ENCODE measurements at regions of chr2 and their contacts with region 1.

Region 1: GRCh38 chr2:240434728-240435456 is 571 bp upstream of the GPC1 start:
- DNase-seq: peak; percentile 52
- ATAC-seq: no peak
- H3K4me3 ChIP-seq: peak overlapping the region in 2 of 3 experiments; percentile 25 to 49; a peak in 2 of 6 replicates
- H3K27ac ChIP-seq: no peak overlapping the region
- H3K4me1 ChIP-seq: peaks cover 10% of the 10 kb centered on the region
- H3K27me3 ChIP-seq: peaks cover 36 to 69% of the 10 kb centered on the region in 2 experiments
- CTCF ChIP-seq: no peak
- EP300 ChIP-seq: no peak
- POLR2A ChIP-seq: no peak
- RAD21 ChIP-seq: no peak

Region 2: DNA sequence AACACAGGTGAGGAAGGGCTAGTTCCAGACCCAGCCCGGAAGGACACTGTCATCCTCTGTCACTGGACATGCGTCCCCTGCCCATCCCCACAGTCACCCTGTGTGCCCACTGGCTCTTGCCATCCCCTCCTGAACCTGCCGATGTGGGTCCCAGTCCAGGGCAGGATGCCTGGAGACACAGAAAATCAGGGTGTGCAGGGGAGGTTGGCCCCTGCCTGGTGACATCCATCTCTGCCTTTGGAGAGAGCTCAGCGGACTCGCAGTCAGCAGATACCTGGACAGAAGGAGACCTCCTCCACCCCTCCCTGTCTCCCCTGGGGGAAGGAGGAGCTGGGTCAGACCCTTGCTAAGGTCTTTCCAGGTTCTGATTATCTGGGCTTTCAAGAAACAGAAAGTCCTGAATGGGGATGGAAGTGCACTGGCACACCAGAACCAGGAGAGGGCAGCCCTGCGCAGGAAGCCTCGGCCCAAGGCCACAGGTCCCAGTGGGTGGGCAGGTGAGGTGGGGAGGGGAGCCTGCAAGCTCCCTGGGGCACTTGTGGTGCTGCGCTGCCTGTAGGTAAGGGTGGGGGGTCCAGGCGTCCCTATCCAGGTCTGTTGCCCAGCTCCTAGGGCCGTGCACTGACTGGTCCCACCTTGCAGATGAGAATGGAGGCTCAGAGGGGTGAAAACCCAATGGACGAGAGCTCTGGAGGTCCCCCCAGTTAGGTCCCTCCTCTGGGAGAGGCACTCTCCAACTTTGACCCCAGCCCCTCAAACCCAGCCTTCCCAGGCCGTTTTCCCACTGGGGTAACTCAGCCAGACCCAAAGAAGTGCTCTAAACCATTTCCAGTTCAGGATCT is 284.7 kb before region 1 on chr2:
- CTCF ChIA-PET with region 1: interaction called, 11 read pairs
- POLR2A ChIA-PET with region 1: no interaction called
- in situ Hi-C with region 1: loop called (anchors 5 kb)
- intact Hi-C with region 1: loop called (anchors 5 kb)
- DNase-seq: peak; percentile 40
- ATAC-seq: peak; percentile 79
- H3K4me3 ChIP-seq: no peak overlapping the region
- H3K27ac ChIP-seq: no peak overlapping the region
- H3K4me1 ChIP-seq: peaks cover 12% of the 10 kb centered on the region
- H3K27me3 ChIP-seq: peaks cover 8 to 63% of the 10 kb centered on the region in 2 experiments; a peak in 4 of 5 replicates
- CTCF ChIP-seq: peak; percentile 91
- EP300 ChIP-seq: no peak
- POLR2A ChIP-seq: no peak
- RAD21 ChIP-seq: peak; percentile 72

Region 3: DNA sequence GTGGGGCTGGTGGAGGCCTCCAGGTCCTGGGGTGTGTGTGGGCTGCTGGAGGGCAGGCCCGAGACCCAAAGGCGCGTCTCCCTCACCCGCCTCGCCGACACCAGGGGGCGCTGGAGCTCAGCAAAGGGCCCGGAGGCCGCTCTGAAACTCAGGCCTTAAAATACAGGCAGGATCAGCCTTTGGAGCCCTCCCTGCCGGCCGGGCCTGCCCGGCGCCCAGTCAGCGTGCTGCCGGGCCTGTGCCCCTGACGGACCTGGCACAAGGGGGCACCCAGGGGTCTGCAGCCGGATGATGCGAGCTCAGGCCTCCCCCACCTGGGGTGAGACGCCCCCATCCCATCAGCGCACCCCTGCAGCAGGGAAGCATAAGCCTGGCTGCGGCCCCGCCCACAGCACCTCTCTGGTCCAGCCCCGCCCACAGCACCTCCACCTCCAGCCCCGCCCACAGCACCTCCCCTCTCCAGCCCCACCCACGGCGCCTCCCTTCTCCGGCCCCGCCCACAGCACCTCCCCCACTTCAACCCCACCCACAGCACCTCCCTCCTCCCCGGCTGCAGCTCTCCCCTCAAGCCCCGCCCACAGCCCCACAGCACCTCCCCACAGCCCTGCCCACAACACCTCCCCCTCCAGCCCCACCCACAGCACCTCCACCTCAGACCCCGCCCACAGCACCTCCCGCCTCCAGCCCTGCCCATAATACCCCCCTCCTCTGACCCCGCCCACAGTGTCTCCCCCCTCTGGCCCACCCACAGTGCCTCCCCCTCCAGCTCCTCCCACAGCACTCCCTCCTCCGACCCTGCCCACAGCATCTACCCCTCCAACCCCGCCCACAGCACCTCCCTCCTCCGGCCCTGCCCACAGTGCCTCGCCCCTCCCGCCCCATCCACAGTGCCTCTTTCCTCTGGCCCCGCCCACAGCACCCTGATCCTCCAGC is 201.7 kb before region 1 on chr2:
- CTCF ChIA-PET with region 1: interaction called, 84 read pairs
- POLR2A ChIA-PET with region 1: no interaction called
- in situ Hi-C with region 1: loop called (anchors 5 kb)
- intact Hi-C with region 1: loop called (anchors 1 kb)
- DNase-seq: peak; percentile 68
- ATAC-seq: peak; percentile 86
- H3K4me3 ChIP-seq: peak overlapping the region in 2 of 3 experiments; percentile 35 to 64; a peak in 3 of 6 replicates
- H3K27ac ChIP-seq: no peak overlapping the region
- H3K4me1 ChIP-seq: peaks cover 15% of the 10 kb centered on the region
- H3K27me3 ChIP-seq: peaks cover 12 to 54% of the 10 kb centered on the region in 2 experiments
- CTCF ChIP-seq: peak; percentile 99
- EP300 ChIP-seq: peak in 1 of 2 experiments; percentile 32; a peak in 1 of 4 replicates
- POLR2A ChIP-seq: no peak
- RAD21 ChIP-seq: peak; percentile 99

Region 4: DNA sequence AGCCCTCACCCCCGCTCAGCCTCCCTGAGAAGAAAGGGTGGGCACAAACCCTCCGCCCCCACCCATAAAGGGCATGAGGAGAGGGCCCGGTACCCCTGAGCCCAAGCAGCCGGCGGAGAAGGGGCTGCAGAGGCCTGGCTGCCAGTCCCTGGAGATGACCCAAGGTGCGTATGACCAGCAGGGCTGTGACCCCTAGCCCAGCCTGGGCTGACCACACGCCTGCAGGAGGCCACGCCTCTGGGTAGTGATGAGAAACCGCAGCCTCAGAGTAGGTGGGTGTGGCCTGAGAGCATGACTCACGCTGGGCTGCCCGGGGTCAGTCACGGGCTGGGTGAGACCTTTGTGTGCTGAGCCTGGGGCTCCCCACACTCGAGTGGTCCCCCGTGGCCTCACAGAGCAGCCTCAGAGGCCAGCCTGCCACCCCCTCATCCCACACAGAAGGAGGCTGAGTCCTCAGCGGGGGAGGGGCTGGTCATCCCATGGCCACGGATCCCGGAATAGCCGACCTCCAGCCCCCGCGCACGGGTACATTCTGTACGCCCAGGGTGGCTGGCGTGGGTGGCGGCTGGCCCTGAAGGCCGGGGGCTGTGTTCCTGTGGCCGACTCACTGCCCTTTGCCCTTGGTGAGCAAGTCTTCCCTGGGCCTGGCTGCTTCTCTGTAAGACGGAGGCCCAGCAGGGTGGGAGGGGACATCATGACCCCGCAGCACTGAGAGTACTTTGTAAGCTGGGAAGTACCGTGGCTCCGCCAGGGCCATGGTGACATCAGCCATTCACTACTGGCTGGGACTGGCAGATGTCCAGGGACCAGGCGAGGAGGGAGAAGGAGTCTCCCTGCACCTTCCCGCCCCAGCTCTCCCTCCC is 183.7 kb before region 1 on chr2:
- CTCF ChIA-PET with region 1: no interaction called
- POLR2A ChIA-PET with region 1: interaction called, 7 read pairs
- in situ Hi-C with region 1: no loop called
- intact Hi-C with region 1: loop called (anchors 5 kb)
- DNase-seq: peak; percentile 94
- ATAC-seq: peak; percentile 89
- H3K4me3 ChIP-seq: peak overlapping the region; percentile 45 to 78 (median 53)
- H3K27ac ChIP-seq: peak overlapping the region; percentile 68
- H3K4me1 ChIP-seq: peaks cover 67% of the 10 kb centered on the region
- H3K27me3 ChIP-seq: no peaks in the 10 kb centered on the region; a peak in 1 of 5 replicates
- CTCF ChIP-seq: peak; percentile 23; the same call in 1 of the 2 replicates
- EP300 ChIP-seq: peak in 1 of 2 experiments; percentile 7; a peak in 1 of 4 replicates
- POLR2A ChIP-seq: peak in 1 of 2 experiments; percentile 93; a peak in 2 of 4 replicates
- RAD21 ChIP-seq: no peak

Region 5: GRCh38 chr2:240452457-240453256 is 17.8 kb after region 1 on chr2:
- CTCF ChIA-PET with region 1: no interaction called
- POLR2A ChIA-PET with region 1: no interaction called
- in situ Hi-C with region 1: no loop called
- intact Hi-C with region 1: no loop called
- DNase-seq: peak; percentile 41
- ATAC-seq: peak; percentile 46
- H3K4me3 ChIP-seq: peak overlapping the region; percentile 53 to 75 (median 58)
- H3K27ac ChIP-seq: no peak overlapping the region
- H3K4me1 ChIP-seq: peaks cover 41% of the 10 kb centered on the region
- H3K27me3 ChIP-seq: peaks cover 41 to 87% of the 10 kb centered on the region in 2 experiments
- CTCF ChIP-seq: no peak
- EP300 ChIP-seq: no peak
- POLR2A ChIP-seq: no peak
- RAD21 ChIP-seq: no peak

Measured in HepG2 (cell line).